Ovary (tissue), 10 donors: ENCODE measurements at regions of chr1 and their contacts with region 1.

Region 1: GRCh38 chr1:47437447-47438164 is at the start of gene FOXD2:
- DNase-seq: peak; percentile 62 to 81 (median 70)
- H3K4me3 ChIP-seq: peak within 1 kb of the TSS; percentile 65
- H3K27ac ChIP-seq: no peak within 1 kb of the TSS
- H3K4me1 ChIP-seq: peaks cover 6% of the 10 kb centered on the region
- H3K27me3 ChIP-seq: no peaks in the 10 kb centered on the region
- CTCF ChIP-seq: peak; percentile 72 to 90 (median 78)
- EP300 ChIP-seq: no peak
- POLR2A ChIP-seq: no peak
- total RNA-seq, gene FOXD2: 0.07 to 0.18 (median 0.09) TPM in 4 of 7 donors, not detected in the others

Region 2: DNA sequence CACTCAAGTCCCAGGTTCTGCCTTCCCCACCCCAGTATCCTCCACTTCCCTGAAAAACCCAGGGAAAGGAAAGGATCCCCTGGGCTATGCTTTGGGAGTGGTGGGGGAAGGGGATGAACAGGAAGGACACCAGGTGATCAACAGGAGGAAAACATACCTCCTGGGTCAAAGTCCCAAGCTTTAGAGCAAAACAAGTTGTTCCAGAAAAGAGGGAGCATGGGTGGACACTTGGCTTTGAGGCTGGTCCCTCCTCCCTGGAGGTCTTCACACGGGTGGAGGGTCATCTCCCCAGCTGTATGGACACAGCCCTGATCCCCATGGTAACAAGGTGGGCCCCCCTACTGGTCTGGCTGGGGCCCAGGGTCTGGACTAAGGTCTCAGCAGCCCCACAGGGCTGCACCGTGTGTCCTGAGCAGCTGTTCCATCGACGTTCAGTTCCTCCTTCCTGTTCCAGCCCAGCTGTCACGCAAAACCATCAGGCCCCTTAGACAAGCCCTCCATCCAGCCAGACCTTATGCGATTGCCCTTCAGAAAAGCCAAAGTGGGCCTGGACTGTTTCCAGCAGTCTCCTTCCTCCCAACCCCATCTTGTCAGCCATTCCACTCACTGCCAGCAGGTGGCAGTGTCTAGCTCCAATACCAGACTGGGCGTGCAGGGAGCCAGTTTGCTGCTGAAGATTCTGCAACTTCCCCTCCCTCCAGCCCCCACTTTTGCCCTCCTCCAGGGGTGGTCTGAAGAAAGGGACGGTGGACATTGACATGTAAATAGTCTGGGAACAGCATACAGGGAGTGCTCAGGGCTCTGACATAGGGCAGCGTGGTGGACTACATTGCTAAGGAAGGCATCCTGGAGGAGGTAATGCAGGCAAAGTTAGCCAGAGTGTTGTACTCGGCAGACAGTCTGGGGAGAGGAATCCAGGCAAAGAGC is 244.9 kb before region 1 on chr1:
- intact Hi-C with region 1: loop called in 1 of 4 experiments (anchors 10 kb)
- DNase-seq: peak; percentile 57 to 79 (median 73)
- H3K4me3 ChIP-seq: no peak overlapping the region
- H3K27ac ChIP-seq: no peak overlapping the region
- H3K4me1 ChIP-seq: peaks cover 12% of the 10 kb centered on the region
- H3K27me3 ChIP-seq: no peaks in the 10 kb centered on the region
- CTCF ChIP-seq: peak; percentile 37 to 78 (median 54)
- EP300 ChIP-seq: no peak
- POLR2A ChIP-seq: no peak

Region 3: GRCh38 chr1:48164571-48164970 is 727.0 kb after region 1 on chr1:
- intact Hi-C with region 1: no loop called
- DNase-seq: no peak
- H3K4me3 ChIP-seq: no peak overlapping the region
- H3K27ac ChIP-seq: no peak overlapping the region
- H3K4me1 ChIP-seq: no peaks in the 10 kb centered on the region
- H3K27me3 ChIP-seq: no peaks in the 10 kb centered on the region
- CTCF ChIP-seq: no peak
- EP300 ChIP-seq: no peak
- POLR2A ChIP-seq: no peak